MCF 10A (cell line): ENCODE measurements at regions of chr4 and their contacts with region 1.

Region 1: DNA sequence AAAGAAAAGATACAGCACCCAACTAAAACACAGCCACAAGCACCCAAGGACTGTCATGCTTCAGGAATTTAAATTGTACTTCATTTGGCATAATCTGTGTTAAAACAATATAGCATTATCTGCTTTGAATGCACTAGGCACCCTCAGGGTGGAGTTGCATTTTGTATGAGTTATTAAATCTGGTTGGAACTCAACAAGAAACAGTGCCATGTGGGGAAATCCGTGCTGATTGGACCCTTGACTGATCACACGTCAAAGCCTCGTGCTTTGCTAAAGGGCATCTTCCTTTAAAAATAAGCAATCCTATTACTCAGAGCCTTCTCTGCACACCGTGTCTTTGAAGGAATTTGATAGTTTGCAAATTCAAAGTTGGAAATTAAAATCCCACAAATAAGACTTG is 35.4 kb downstream of the IGFBP7 start:
- DNase-seq: peak; percentile 89
- H3K4me3 Mint-ChIP-seq: peak overlapping the region; percentile 15
- H3K27ac Mint-ChIP-seq: peak overlapping the region; percentile 95
- H3K4me1 Mint-ChIP-seq: peaks cover 51% of the 10 kb centered on the region
- H3K27me3 Mint-ChIP-seq: no peaks in the 10 kb centered on the region
- CTCF ChIP-seq: no peak

Region 2: DNA sequence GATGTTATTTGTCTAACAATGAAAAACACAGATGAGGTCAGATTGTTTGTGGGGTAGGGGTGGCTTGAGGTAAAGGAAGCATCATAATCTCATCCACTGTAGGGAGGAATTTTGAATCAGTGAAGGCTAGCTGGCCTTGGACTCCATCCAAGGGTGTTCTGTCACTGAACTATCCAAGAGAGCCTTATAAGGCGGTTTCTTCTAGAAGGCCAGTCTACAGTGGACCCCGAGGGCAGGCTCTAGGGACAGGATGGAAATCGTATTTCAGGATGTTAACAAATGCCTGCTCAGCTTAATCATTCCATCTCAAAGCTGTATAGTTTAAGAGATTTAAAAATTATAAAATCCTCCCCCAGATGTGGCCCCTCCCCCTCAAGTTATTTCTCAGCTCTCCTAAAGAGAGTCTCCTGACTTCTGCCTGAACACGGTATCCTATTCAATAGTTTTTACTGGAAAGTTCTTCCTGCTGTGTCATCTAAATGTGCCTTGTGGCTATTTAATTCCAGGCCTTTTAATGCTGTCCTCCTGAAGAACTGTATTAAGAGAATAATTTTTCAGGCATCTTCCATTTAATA is 27.4 kb after region 1 on chr4:
- CTCF ChIA-PET with region 1: interaction called, 4 read pairs
- POLR2A ChIA-PET with region 1: interaction called, 61 read pairs
- intact Hi-C with region 1: no loop called
- DNase-seq: peak; percentile 62
- H3K4me3 Mint-ChIP-seq: no peak overlapping the region
- H3K27ac Mint-ChIP-seq: peak overlapping the region; percentile 55
- H3K4me1 Mint-ChIP-seq: peaks cover 47% of the 10 kb centered on the region
- H3K27me3 Mint-ChIP-seq: no peaks in the 10 kb centered on the region
- CTCF ChIP-seq: no peak